Activated T-helper 2 cell treated with anti-CD3 and anti-CD28 coated beads, Interferon-gamma antibody, Interleukin-2, Interleukin-4, amounts not matched to agents 10 μg/mL and 5 μg/mL and 100 μg/mL, durations not matched to agents 14 hours and 24 hours and 36 hours (primary cell): ENCODE measurements at regions of chr5 and their contacts with region 1.

Region 1: GRCh38 chr5:88690409-88691229 is 192.4 kb downstream of the MEF2C start:
- DNase-seq: peak; percentile 60
- H3K4me3 Mint-ChIP-seq: no peak overlapping the region
- H3K27ac Mint-ChIP-seq: peak overlapping the region; percentile 73
- H3K4me1 Mint-ChIP-seq: peaks cover 7% of the 10 kb centered on the region
- H3K27me3 Mint-ChIP-seq: peaks cover 91% of the 10 kb centered on the region

Region 2: DNA sequence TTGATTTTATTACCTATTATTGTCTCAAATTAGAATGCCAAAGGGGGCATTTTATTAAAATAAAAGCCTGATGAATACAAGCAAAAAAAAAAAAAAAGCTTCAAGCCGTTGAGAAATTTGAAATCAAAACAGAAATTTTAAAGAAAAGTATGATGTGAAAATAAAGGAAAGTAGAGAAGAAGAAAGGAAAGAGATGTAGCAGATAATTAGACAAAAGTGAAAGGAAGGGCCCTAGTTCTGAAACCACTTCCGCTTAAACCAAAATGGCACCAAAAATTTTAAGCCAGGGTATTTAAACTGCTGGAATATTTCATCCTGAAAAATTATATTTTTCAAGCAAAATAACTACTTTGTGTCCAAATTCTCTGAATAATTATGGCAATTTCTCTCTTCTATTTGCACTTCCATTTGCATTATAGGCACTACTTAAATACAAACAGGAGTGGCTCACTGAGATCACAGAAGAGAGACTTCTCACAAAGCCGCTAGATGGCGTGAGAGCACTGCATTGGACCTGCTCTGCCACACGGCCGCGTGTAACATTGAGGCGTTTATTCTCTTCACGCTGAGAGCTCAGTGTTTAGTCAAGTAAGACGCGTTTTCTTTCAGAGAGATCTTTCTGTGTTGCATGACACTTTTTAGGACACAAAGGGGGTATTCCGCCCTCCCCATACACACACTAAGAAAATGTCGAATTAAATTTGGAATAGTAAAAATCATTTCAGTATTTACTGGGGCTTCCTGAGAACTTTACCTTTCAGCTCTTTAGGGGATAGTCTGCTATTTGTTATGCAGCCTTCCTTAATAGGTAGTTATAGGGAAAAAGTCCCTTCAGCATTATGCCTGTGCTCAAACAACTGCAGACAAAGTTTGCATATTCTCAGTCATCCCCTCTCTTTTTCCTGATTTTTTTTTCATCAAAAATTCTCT is 909.5 kb before region 1 on chr5:
- intact Hi-C with region 1: loop called (anchors 1 kb)
- DNase-seq: peak; percentile 57
- H3K4me3 Mint-ChIP-seq: no peak overlapping the region
- H3K27ac Mint-ChIP-seq: no peak overlapping the region
- H3K4me1 Mint-ChIP-seq: peaks cover 3% of the 10 kb centered on the region
- H3K27me3 Mint-ChIP-seq: peaks cover 13% of the 10 kb centered on the region

Region 3: GRCh38 chr5:88660947-88661805 is 29.4 kb before region 1 on chr5:
- intact Hi-C with region 1: loop called (anchors 1 kb)
- DNase-seq: peak; percentile 43
- H3K4me3 Mint-ChIP-seq: peak overlapping the region; percentile 70
- H3K27ac Mint-ChIP-seq: no peak overlapping the region
- H3K4me1 Mint-ChIP-seq: peaks cover 21% of the 10 kb centered on the region
- H3K27me3 Mint-ChIP-seq: peaks cover 60% of the 10 kb centered on the region

Region 4: GRCh38 chr5:88666761-88667495 is 23.7 kb before region 1 on chr5:
- intact Hi-C with region 1: loop called (anchors 1 kb)
- DNase-seq: no peak
- H3K4me3 Mint-ChIP-seq: peak overlapping the region; percentile 78
- H3K27ac Mint-ChIP-seq: no peak overlapping the region
- H3K4me1 Mint-ChIP-seq: peaks cover 28% of the 10 kb centered on the region
- H3K27me3 Mint-ChIP-seq: peaks cover 80% of the 10 kb centered on the region

Region 5: GRCh38 chr5:89388872-89389271 is 698.3 kb after region 1 on chr5:
- intact Hi-C with region 1: no loop called
- DNase-seq: no peak
- H3K4me3 Mint-ChIP-seq: no peak overlapping the region
- H3K27ac Mint-ChIP-seq: no peak overlapping the region
- H3K4me1 Mint-ChIP-seq: no peaks in the 10 kb centered on the region
- H3K27me3 Mint-ChIP-seq: no peaks in the 10 kb centered on the region

Region 6: DNA sequence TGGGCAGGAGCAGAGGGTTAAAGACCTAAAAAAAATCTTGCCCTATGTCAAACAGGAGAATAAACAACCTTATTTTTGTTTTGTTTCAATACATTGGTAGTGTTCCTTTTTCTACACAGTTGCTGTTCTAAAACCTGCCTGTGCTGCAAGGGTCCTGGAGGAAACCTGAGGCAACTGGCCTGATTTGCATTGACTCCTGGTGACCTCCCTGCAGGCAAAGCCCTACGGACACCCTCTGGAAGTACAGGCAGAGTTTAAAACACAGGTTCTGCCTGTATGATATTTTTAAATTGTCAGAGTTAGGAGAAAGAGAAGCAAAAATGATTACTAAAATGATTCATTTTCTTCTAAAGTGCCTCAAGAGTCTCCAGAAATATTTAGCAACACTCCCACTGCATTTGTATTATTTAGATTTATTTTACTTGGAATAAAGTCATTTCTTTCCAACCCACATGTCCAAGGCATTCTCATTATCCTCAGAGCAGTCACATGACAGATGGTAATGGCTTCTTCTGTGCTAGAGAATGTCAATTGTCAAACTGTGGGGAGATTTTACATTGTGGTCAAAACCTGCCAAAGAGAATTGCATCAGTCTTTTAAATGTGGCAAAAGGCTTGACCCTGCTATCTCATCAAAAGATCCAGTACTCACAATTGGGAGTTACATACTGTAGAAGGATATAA is 1159.4 kb after region 1 on chr5:
- intact Hi-C with region 1: no loop called
- DNase-seq: no peak
- H3K4me3 Mint-ChIP-seq: no peak overlapping the region
- H3K27ac Mint-ChIP-seq: no peak overlapping the region
- H3K4me1 Mint-ChIP-seq: no peaks in the 10 kb centered on the region
- H3K27me3 Mint-ChIP-seq: no peaks in the 10 kb centered on the region